Gastrocnemius medialis (tissue), 4 donors: ENCODE measurements at regions of chr15 and their contacts with region 1.

Region 1: DNA sequence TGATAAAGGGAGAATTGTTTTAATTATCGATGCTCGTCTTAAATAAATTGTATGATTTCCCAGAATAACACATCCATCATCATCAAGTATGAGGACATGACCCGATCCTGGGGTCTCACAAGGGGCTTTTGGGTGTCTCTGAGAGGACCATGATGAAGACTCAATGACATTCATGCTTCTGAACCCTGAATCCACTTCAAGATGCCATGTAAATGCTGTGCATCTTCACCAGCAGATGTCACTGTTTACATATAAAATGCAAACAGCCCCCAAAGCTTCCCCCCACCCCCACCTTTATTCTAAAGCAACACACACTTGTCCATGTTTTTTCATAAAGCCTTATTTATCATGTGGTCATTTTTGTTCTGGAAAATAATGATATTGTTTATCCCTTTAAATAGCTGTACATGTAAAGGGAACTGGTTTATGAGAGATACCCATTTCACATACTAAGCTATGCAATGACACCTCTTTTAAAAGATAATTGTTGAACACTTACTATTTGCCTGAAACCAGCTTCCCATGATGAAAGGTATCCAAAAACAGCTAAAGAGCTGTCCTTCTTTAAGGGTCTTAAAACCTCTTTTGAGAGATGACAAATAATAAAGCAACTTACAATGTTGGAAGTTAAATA is 69.7 kb upstream of the UBE3A start:
- DNase-seq: no peak
- ATAC-seq: peak in 1 of 2 donors; percentile 50
- H3K4me3 ChIP-seq: no peak overlapping the region
- H3K27ac ChIP-seq: no peak overlapping the region
- H3K4me1 ChIP-seq: no peaks in the 10 kb centered on the region
- H3K27me3 ChIP-seq: no peaks in the 10 kb centered on the region
- CTCF ChIP-seq: peak; percentile 64 to 78 (median 65)
- POLR2A ChIP-seq: no peak

Region 2: GRCh38 chr15:25693321-25694237 is 185.1 kb after region 1 on chr15:
- in situ Hi-C with region 1: loop called in 3 of 4 experiments (anchors 10 kb)
- intact Hi-C with region 1: loop called (anchors 1 kb)
- DNase-seq: no peak
- ATAC-seq: peak; percentile 9 to 48
- H3K4me3 ChIP-seq: no peak overlapping the region
- H3K27ac ChIP-seq: no peak overlapping the region
- H3K4me1 ChIP-seq: peaks cover 0 to 3% of the 10 kb centered on the region in 2 donors
- H3K27me3 ChIP-seq: no peaks in the 10 kb centered on the region
- CTCF ChIP-seq: peak; percentile 34 to 65 (median 45)
- POLR2A ChIP-seq: no peak

Region 3: GRCh38 chr15:25737218-25737643 is 228.7 kb after region 1 on chr15:
- in situ Hi-C with region 1: no loop called
- intact Hi-C with region 1: no loop called
- DNase-seq: peak in 1 of 2 donors; percentile 36
- ATAC-seq: peak; percentile 34 to 82
- H3K4me3 ChIP-seq: no peak overlapping the region
- H3K27ac ChIP-seq: peak overlapping the region in 3 of 4 donors; percentile 33 to 61 (median 41)
- H3K4me1 ChIP-seq: peaks cover 11 to 13% of the 10 kb centered on the region in 2 donors
- H3K27me3 ChIP-seq: no peaks in the 10 kb centered on the region
- CTCF ChIP-seq: no peak
- POLR2A ChIP-seq: no peak

Region 4: GRCh38 chr15:25933456-25934158 is 425.1 kb after region 1 on chr15:
- in situ Hi-C with region 1: loop called (anchors 5 to 25 kb)
- intact Hi-C with region 1: loop called (anchors 2 kb)
- DNase-seq: peak; percentile 43 to 45
- ATAC-seq: peak; percentile 63 to 76
- H3K4me3 ChIP-seq: peak overlapping the region in 3 of 4 donors; percentile 18 to 39 (median 26)
- H3K27ac ChIP-seq: no peak overlapping the region
- H3K4me1 ChIP-seq: no peaks in the 10 kb centered on the region
- H3K27me3 ChIP-seq: no peaks in the 10 kb centered on the region
- CTCF ChIP-seq: peak; percentile 26 to 67 (median 50)
- POLR2A ChIP-seq: no peak

Region 5: DNA sequence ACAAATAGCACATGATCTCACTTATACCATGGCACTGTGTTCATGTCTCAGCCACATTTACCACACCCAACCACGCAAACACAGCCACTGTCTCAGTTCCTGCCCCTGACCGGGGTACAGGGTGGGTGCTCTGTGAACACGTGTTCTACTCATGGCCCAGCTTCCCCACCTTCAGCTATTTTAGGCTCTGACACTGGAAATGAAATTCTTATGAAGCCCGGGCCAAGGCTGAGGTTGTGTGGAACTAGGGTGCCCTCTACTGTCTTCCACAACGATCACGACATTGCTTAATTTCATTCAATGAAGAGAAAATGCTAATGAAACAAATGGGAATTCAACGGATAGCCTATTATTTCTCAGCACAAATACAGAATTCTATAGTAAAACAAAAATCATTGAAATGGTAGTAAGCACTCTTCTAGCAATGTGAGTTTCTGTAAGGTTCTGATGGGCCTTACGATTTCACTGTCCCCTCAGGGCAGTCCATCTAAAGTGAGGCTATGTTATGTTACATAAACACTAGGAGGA is 1356.2 kb after region 1 on chr15:
- in situ Hi-C with region 1: loop called in 1 of 4 experiments (anchors 25 kb)
- intact Hi-C with region 1: no loop called
- DNase-seq: no peak
- ATAC-seq: no peak
- H3K4me3 ChIP-seq: no peak overlapping the region
- H3K27ac ChIP-seq: no peak overlapping the region
- H3K4me1 ChIP-seq: no peaks in the 10 kb centered on the region
- H3K27me3 ChIP-seq: peaks cover 12 to 16% (median 15%) of the 10 kb centered on the region in 3 donors
- CTCF ChIP-seq: no peak
- POLR2A ChIP-seq: no peak